AG04450 (cell line): ENCODE measurements at regions of chr5 and their contacts with region 1.

Region 1: DNA sequence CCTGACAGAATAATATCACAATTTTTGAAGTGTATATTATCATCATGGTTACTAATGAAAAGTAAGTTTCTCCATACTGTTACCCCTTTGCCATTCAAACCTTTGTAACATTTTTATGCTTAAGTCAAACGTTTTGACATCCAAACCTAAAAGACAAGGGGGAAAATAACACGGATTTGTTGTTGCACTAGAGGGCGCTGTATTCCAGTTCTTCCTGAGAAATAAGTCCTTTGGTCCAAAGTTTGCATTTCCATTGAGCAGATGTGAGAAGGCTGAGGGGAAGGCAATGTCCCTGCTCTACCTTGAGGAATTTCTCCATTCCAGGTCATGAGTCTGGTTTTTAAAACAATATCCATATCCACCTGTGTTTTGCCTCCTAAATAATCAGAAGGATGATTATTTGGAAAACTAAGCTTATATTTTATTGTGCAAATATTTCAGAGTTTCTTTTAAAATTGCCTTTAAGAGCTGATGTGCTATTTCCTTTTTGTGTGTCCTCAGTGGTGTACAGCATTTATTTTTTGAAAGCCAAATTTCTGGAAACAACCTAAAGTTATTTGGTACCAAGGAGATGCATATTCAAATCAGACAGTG is 9.7 kb downstream of the LECT2 start:
- DNase-seq: peak; percentile 74
- H3K4me3 ChIP-seq: no peak overlapping the region
- H3K27ac ChIP-seq: no peak overlapping the region
- H3K27me3 ChIP-seq: no peaks in the 10 kb centered on the region
- CTCF ChIP-seq: peak; percentile 79

Region 2: GRCh38 chr5:135934939-135935338 is 10.1 kb before region 1 on chr5:
- CTCF ChIA-PET with region 1: interaction called, 30 read pairs
- POLR2A ChIA-PET with region 1: no interaction called
- DNase-seq: peak; percentile 13
- H3K4me3 ChIP-seq: no peak overlapping the region
- H3K27ac ChIP-seq: no peak overlapping the region
- H3K27me3 ChIP-seq: peaks cover 31% of the 10 kb centered on the region
- CTCF ChIP-seq: no peak

Region 3: GRCh38 chr5:135964670-135965320 is 19.7 kb after region 1 on chr5:
- CTCF ChIA-PET with region 1: interaction called, 21 read pairs
- POLR2A ChIA-PET with region 1: no interaction called
- DNase-seq: no peak
- H3K4me3 ChIP-seq: no peak overlapping the region
- H3K27ac ChIP-seq: no peak overlapping the region
- H3K27me3 ChIP-seq: no peaks in the 10 kb centered on the region
- CTCF ChIP-seq: peak; percentile 26; the same call in 1 of the 2 replicates

Region 4: GRCh38 chr5:136028782-136029742 is 84.0 kb after region 1 on chr5 and contains the start of gene TGFBI:
- CTCF ChIA-PET with region 1: interaction called, 14 read pairs
- POLR2A ChIA-PET with region 1: interaction called, 3 read pairs
- DNase-seq: peak; percentile 30
- H3K4me3 ChIP-seq: peak within 1 kb of the TSS; percentile 93
- H3K27ac ChIP-seq: peak within 1 kb of the TSS; percentile 65
- H3K27me3 ChIP-seq: no peaks in the 10 kb centered on the region
- CTCF ChIP-seq: peak; percentile 25; the same call in 1 of the 2 replicates
- polyA plus RNA-seq, gene TGFBI: 2,219 and 2,576 TPM in 2 replicates

Region 5: GRCh38 chr5:136073714-136074529 is 128.9 kb after region 1 on chr5:
- CTCF ChIA-PET with region 1: interaction called, 22 read pairs
- POLR2A ChIA-PET with region 1: no interaction called
- DNase-seq: no peak
- H3K4me3 ChIP-seq: no peak overlapping the region
- H3K27ac ChIP-seq: no peak overlapping the region
- H3K27me3 ChIP-seq: no peaks in the 10 kb centered on the region
- CTCF ChIP-seq: no peak

Region 6: DNA sequence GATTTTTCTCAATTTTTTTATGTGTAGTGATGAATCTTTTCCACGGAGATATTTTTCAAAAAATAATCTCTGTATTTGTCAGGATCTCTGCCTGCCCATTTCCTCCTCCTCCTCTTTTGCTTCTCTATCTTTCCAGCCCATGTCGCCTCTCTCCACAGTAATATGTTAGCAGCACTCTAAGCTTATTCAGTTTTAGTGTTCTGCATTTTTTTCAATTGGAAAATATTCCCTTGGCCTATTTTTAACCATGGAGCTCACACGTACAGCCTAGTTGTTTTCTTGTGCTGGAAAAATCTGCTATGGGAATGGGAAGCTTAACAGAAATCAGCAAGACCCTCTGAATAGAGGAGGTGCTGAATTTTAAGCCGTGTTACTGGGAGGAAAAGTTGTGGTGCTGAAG is 404.0 kb after region 1 on chr5:
- CTCF ChIA-PET with region 1: no interaction called
- POLR2A ChIA-PET with region 1: no interaction called
- DNase-seq: no peak
- H3K4me3 ChIP-seq: no peak overlapping the region
- H3K27ac ChIP-seq: no peak overlapping the region
- H3K27me3 ChIP-seq: no peaks in the 10 kb centered on the region
- CTCF ChIP-seq: no peak